ENCODE measurements at regions of chr2 and their contacts with region 1.

Region 1: DNA sequence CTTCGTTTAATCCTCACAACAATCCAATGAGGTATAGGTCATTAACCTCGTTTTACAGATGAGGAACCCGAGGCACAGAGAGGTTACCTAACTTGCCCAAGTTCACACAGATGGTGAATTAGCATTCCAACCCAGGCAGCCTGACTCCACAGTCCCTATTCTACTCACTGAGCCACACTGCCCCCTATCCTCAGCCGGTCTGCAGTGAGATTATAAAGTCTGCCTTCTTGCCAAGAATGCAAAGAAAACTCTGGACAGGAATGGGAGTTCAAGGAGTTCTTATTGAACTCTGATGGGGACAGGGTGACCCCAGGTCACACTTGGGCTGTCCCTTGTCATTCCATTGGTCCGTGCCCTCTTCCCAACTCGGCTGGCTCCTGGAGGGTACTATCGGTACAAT is 118.1 kb upstream of the MSH6 start:
- DNase-seq: no peak
- ATAC-seq: no peak
- H3K4me3 ChIP-seq: no peak overlapping the region
- H3K27ac ChIP-seq: no peak overlapping the region
- H3K4me1 ChIP-seq: no peaks in the 10 kb centered on the region
- H3K27me3 ChIP-seq: peaks cover 6% of the 10 kb centered on the region
- CTCF ChIP-seq: no peak
- POLR2A ChIP-seq: no peak
- RAD21 ChIP-seq: no peak

Region 2: GRCh38 chr2:47719099-47719498 is 54.3 kb after region 1 on chr2:
- CTCF ChIA-PET with region 1: no interaction called
- POLR2A ChIA-PET with region 1: no interaction called
- dilution Hi-C with region 1: no loop called
- in situ Hi-C with region 1: no loop called
- intact Hi-C with region 1: loop called (anchors 5 kb)
- DNase-seq: no peak
- ATAC-seq: no peak
- H3K4me3 ChIP-seq: no peak overlapping the region
- H3K27ac ChIP-seq: no peak overlapping the region
- H3K4me1 ChIP-seq: no peaks in the 10 kb centered on the region
- H3K27me3 ChIP-seq: peaks cover 2% of the 10 kb centered on the region
- CTCF ChIP-seq: no peak
- POLR2A ChIP-seq: no peak
- RAD21 ChIP-seq: no peak

Region 3: GRCh38 chr2:47737191-47737975 is 72.6 kb after region 1 on chr2:
- CTCF ChIA-PET with region 1: no interaction called
- POLR2A ChIA-PET with region 1: no interaction called
- dilution Hi-C with region 1: no loop called
- in situ Hi-C with region 1: no loop called
- intact Hi-C with region 1: no loop called
- DNase-seq: no peak
- ATAC-seq: no peak
- H3K4me3 ChIP-seq: no peak overlapping the region
- H3K27ac ChIP-seq: no peak overlapping the region
- H3K4me1 ChIP-seq: no peaks in the 10 kb centered on the region
- H3K27me3 ChIP-seq: peaks cover 19% of the 10 kb centered on the region; the same call in 1 of the 2 replicates
- CTCF ChIP-seq: no peak
- POLR2A ChIP-seq: no peak
- RAD21 ChIP-seq: no peak

Region 4: GRCh38 chr2:47822518-47822917 is 157.7 kb after region 1 on chr2:
- CTCF ChIA-PET with region 1: no interaction called
- POLR2A ChIA-PET with region 1: interaction called, 12 read pairs
- dilution Hi-C with region 1: no loop called
- in situ Hi-C with region 1: no loop called
- intact Hi-C with region 1: no loop called
- DNase-seq: no peak
- ATAC-seq: no peak
- H3K4me3 ChIP-seq: no peak overlapping the region
- H3K27ac ChIP-seq: no peak overlapping the region
- H3K4me1 ChIP-seq: no peaks in the 10 kb centered on the region
- H3K27me3 ChIP-seq: no peaks in the 10 kb centered on the region
- CTCF ChIP-seq: no peak
- POLR2A ChIP-seq: no peak
- RAD21 ChIP-seq: no peak

Region 5: GRCh38 chr2:47917276-47917961 is 252.6 kb after region 1 on chr2:
- CTCF ChIA-PET with region 1: no interaction called
- POLR2A ChIA-PET with region 1: no interaction called
- dilution Hi-C with region 1: no loop called
- in situ Hi-C with region 1: no loop called
- intact Hi-C with region 1: no loop called
- DNase-seq: no peak
- ATAC-seq: no peak
- H3K4me3 ChIP-seq: no peak overlapping the region
- H3K27ac ChIP-seq: no peak overlapping the region
- H3K4me1 ChIP-seq: no peaks in the 10 kb centered on the region
- H3K27me3 ChIP-seq: peaks cover 3% of the 10 kb centered on the region; the same call in 1 of the 2 replicates
- CTCF ChIP-seq: no peak
- POLR2A ChIP-seq: no peak
- RAD21 ChIP-seq: no peak

Region 6: DNA sequence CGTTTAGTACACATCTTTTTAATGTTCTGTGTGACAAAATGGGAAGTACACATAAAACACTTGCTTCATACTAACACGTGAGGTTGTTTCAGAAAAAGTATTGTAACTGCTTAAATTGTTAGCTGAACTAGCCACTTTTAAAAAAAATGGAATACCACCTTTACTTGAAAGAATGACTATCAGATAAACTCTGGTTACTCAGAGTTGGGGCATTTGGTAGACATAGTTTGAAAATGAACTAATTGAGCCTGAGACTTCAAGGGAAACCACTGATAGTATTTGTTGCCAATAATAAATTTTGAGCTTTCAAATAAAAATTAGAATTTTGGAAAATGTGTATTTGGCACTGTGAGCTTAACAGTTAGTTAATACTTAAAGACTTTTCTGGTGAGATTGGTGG is 344.4 kb after region 1 on chr2:
- CTCF ChIA-PET with region 1: no interaction called
- POLR2A ChIA-PET with region 1: no interaction called
- dilution Hi-C with region 1: no loop called
- in situ Hi-C with region 1: no loop called
- intact Hi-C with region 1: no loop called
- DNase-seq: no peak
- ATAC-seq: no peak
- H3K4me3 ChIP-seq: no peak overlapping the region
- H3K27ac ChIP-seq: no peak overlapping the region
- H3K4me1 ChIP-seq: no peaks in the 10 kb centered on the region
- H3K27me3 ChIP-seq: no peaks in the 10 kb centered on the region; the same call in 1 of the 2 replicates
- CTCF ChIP-seq: no peak
- POLR2A ChIP-seq: no peak
- RAD21 ChIP-seq: no peak